AG04449 (cell line): ENCODE measurements at regions of chr5 and their contacts with region 1.

Region 1: GRCh38 chr5:122156724-122157325 is 27.5 kb downstream of the ZNF474 start:
- DNase-seq: no peak
- H3K4me3 ChIP-seq: no peak overlapping the region
- CTCF ChIP-seq: peak; percentile 35

Region 2: DNA sequence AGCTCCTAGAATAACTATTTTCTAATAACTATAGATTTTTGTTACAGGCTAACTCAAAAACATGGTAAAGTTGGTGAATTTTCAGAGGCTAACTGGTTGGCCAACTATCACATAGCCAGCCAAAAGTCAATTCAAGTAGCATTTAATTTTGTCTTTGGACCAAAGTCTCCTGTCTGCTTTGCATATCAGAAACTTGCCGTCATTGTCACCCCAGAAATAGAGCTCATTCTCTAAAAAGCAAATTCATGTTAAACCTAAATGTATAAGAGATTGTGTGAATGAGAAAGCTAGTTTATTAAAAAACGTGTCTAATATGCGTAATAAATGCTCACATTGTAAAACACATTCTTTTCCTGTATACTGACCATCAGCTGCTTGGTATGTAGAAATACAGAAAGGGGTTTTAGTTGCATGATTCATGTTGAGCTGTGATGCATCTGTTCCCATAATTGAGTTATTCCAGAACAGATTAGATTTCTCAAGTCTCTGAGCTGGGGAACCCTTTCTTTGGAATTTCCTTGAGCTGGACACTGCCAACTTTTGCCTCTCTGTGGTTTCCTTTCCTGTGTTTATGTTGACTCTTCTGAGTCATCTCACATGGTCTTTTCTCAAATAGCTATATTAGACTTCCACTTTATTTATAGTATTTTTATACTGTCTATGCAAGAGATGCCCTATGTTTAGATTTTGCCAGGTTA is 187.8 kb before region 1 on chr5:
- CTCF ChIA-PET with region 1: interaction called, 56 read pairs
- POLR2A ChIA-PET with region 1: interaction called, 4 read pairs
- DNase-seq: peak; percentile 97
- H3K4me3 ChIP-seq: no peak overlapping the region
- CTCF ChIP-seq: no peak

Region 3: DNA sequence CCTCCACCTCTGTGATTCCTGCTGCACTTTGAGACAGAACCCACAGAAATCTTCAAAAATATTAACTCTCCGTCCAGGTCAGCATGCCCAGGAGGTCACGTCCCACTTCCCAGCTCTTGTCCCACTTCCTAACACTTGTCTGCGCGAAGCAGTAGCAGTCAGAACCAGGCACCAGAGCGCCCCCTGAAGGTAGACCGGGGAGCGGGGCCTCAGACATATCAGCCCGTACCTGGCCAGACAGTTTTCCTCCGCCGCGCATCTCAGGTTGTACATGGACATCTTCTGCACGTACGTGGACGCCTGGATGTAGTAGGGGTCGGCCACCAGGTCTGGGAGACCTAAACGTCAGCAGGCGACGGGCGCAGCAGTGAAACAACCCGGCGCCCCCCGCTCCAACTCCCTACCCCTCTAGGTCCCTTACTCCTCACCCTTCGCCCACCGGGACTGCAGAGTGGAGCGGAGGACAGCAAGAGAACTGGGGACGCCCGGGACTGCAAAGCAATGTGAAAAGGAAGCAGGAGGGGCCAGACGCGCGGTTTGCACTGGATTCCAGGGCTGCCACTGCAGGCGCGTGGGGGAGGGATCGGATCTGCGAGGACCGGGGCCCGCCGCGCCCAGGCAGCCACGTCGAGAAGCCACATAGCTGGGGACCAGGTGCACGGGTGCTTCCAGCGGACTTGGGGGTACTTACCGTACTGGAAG is 80.0 kb before region 1 on chr5:
- CTCF ChIA-PET with region 1: interaction called, 78 read pairs
- POLR2A ChIA-PET with region 1: interaction called, 20 read pairs
- DNase-seq: no peak
- H3K4me3 ChIP-seq: peak overlapping the region; percentile 90
- CTCF ChIP-seq: peak; percentile 96

Region 4: GRCh38 chr5:122101636-122102285 is 55.1 kb before region 1 on chr5:
- CTCF ChIA-PET with region 1: interaction called, 166 read pairs
- POLR2A ChIA-PET with region 1: no interaction called
- DNase-seq: no peak
- H3K4me3 ChIP-seq: no peak overlapping the region
- CTCF ChIP-seq: peak; percentile 46

Region 5: GRCh38 chr5:122142480-122143164 is 14.2 kb before region 1 on chr5:
- CTCF ChIA-PET with region 1: interaction called, 81 read pairs
- POLR2A ChIA-PET with region 1: interaction called, 14 read pairs
- DNase-seq: no peak
- H3K4me3 ChIP-seq: no peak overlapping the region
- CTCF ChIP-seq: no peak

Region 6: DNA sequence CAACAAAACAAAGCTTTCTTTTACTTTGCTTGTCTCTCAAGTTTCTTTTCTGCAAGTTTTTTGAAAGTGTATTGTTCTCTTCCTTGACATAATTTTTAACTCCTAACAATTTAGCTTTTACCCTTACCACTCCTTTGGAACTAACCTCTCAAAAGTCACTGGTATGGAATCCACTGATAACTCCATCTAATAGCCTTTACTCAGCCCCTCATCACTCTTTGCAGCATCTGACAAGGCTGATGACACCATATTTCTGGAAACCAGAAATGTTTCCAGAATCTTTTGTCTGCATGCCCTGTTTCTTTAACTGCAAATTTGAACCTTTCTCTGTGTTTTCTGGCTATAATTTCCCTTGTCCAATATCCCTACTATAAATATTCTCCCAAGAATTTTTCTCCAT is 19.0 kb after region 1 on chr5:
- CTCF ChIA-PET with region 1: interaction called, 26 read pairs
- POLR2A ChIA-PET with region 1: no interaction called
- DNase-seq: no peak
- H3K4me3 ChIP-seq: no peak overlapping the region
- CTCF ChIP-seq: no peak

Region 7: GRCh38 chr5:122192497-122193496 is 36.0 kb after region 1 on chr5:
- CTCF ChIA-PET with region 1: interaction called, 11 read pairs
- POLR2A ChIA-PET with region 1: no interaction called
- DNase-seq: no peak
- H3K4me3 ChIP-seq: no peak overlapping the region
- CTCF ChIP-seq: peak; percentile 55

Region 8: GRCh38 chr5:122351416-122352157 is 194.8 kb after region 1 on chr5:
- CTCF ChIA-PET with region 1: no interaction called
- POLR2A ChIA-PET with region 1: no interaction called
- DNase-seq: no peak
- H3K4me3 ChIP-seq: no peak overlapping the region
- CTCF ChIP-seq: no peak